Posterior vena cava (tissue), 2 donors: ENCODE measurements at regions of chr16 and their contacts with region 1.

Region 1: DNA sequence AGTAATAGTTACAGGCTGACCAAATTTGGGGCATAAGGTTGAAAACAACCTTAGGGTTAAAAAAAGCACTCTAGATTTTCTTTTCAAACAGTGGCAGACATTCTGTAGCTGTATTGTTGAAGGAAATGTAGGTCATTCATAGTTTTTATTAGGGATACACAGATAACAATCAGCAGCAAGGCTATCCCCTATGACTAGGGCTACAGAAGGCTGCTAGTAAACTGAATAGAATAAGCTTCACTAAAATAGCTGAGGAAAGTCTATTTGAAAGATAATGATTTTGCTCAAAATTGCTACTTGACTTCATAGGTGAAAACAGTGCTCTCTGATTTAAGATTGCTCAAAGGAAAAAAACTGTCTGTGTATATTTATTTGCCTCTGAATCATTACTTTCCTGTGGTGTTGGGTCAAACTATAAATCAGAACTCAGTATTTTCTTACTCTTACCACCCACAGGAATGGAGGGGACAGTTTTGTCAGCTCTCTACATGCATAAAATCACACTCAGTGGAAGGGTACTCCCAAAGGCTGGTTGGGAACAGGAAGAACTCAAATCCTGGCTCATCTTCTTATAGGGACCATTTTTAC is 24.8 kb downstream of the RPGRIP1L start:
- DNase-seq: no peak

Region 2: DNA sequence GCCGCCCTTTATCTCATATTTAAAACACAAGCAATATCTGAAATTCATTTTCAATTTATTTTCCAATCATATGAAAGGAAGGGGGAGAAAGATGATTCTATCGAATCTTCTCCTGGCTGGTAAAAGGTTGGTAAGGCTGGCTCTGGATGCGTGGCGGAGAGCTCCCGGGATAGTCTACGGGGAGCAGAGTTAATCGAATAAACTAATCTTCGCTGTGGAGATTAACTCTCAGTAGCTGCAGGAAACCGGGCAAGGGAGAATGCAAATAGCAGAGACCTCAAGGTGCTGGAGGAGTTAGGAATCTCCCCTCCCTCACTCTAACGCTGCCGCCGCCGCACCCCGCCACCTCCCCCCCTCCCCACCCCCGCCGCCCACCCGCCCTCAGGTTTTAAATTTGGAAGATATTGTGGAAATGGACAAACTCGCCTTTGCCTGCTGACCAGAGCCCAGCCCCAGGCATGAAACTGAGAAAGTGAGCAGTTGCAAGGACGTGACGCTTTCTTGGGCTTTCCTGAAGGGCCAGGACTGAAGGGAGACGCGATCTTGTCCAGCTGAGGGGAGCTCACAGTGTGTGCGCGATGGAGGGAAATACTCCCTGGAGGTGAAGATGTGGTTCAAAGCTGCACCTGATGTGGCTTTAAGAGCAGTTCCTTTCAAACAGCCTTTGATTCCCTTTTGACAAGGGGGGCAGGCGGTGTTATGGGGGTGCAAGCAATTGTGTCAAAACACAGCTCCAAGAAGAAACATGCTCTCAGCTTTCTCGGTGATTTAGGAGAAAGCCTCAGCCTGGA is 915.9 kb after region 1 on chr16:
- intact Hi-C with region 1: loop called in 1 of 2 experiments (anchors 5 kb)
- DNase-seq: no peak